Transverse colon (tissue), 4 donors: ENCODE measurements at regions of chr1 and their contacts with region 1.

Region 1: DNA sequence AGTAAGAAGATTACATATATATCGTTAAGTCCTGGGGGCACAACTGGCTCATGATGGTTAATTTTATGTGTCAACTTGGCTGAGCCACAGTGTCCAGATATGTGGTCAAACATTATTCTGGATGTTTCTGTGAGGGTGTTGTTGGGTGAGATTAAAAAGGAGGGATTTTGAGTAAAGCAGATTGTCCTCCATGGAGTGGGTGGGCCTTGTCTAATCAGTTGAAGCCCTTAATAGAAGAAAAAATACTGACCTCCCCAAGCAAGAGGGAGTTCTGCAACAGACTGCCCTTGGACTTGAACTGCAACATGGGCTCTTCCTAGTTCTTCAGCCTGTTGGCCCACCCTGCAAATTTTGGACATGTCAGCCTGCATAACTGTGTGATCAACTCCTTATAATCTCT is 311.6 kb downstream of the RPS6KC1 start:
- DNase-seq: no peak
- H3K4me3 ChIP-seq: no peak overlapping the region
- H3K27ac ChIP-seq: no peak overlapping the region
- H3K4me1 ChIP-seq: no peaks in the 10 kb centered on the region
- H3K27me3 ChIP-seq: no peaks in the 10 kb centered on the region
- CTCF ChIP-seq: no peak
- EP300 ChIP-seq: no peak
- POLR2A ChIP-seq: no peak

Region 2: GRCh38 chr1:211839106-211839505 is 1523.5 kb before region 1 on chr1:
- in situ Hi-C with region 1: no loop called
- intact Hi-C with region 1: loop called (anchors 5 kb)
- DNase-seq: no peak
- H3K4me3 ChIP-seq: no peak overlapping the region
- H3K27ac ChIP-seq: no peak overlapping the region
- H3K4me1 ChIP-seq: peaks cover 0 to 8% (median 5%) of the 10 kb centered on the region in 4 donors
- H3K27me3 ChIP-seq: no peaks in the 10 kb centered on the region
- CTCF ChIP-seq: no peak
- EP300 ChIP-seq: no peak
- POLR2A ChIP-seq: no peak

Region 3: GRCh38 chr1:213284626-213285025 is 78.0 kb before region 1 on chr1:
- in situ Hi-C with region 1: no loop called
- intact Hi-C with region 1: no loop called
- DNase-seq: no peak
- H3K4me3 ChIP-seq: no peak overlapping the region
- H3K27ac ChIP-seq: no peak overlapping the region
- H3K4me1 ChIP-seq: no peaks in the 10 kb centered on the region
- H3K27me3 ChIP-seq: no peaks in the 10 kb centered on the region
- CTCF ChIP-seq: no peak
- EP300 ChIP-seq: no peak
- POLR2A ChIP-seq: no peak

Region 4: GRCh38 chr1:213399695-213400094 is 37.1 kb after region 1 on chr1:
- in situ Hi-C with region 1: no loop called
- intact Hi-C with region 1: no loop called
- DNase-seq: no peak
- H3K4me3 ChIP-seq: no peak overlapping the region
- H3K27ac ChIP-seq: no peak overlapping the region
- H3K4me1 ChIP-seq: no peaks in the 10 kb centered on the region
- H3K27me3 ChIP-seq: no peaks in the 10 kb centered on the region
- CTCF ChIP-seq: no peak
- EP300 ChIP-seq: no peak
- POLR2A ChIP-seq: no peak